Endothelial cell of umbilical vein (primary cell): ENCODE measurements at regions of chr21 and their contacts with region 1.

Region 1: DNA sequence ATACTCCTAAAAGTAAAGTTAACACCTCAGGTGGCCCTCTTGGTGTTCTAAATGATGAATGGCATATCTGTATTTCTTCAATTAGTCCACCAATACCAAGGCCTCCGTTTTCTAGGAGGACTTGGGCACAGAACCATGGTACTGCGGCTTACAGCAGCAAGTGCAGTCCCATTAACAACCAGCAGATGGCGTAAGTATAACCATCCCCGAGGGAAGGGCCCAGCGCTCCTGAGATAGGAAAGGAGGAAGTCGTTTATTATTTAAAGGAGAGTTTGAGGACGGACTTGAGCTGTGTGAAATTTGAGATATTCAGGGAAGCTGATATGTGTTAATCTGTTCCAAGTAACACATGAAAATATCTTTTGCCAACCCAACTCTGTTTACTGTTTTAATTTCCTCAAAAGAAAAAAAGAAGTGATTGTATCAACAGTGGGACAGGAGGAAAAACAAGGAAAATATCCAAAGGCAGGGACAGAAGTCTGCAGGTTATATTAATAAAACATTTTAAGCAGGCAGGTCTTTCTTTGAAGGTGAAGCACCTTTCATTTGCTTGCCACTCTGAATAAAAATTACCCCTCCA is 37.7 kb upstream of the KCNJ15 start:
- DNase-seq: peak; percentile 87
- H3K4me3 ChIP-seq: no peak overlapping the region
- H3K27ac ChIP-seq: no peak overlapping the region
- H3K4me1 ChIP-seq: peaks cover 7% of the 10 kb centered on the region
- H3K27me3 ChIP-seq: no peaks in the 10 kb centered on the region
- CTCF ChIP-seq: peak; percentile 87 to 91
- POLR2A ChIP-seq: no peak

Region 2: GRCh38 chr21:38037416-38037815 is 181.7 kb before region 1 on chr21:
- CTCF ChIA-PET with region 1: no interaction called
- POLR2A ChIA-PET with region 1: no interaction called
- dilution Hi-C with region 1: no loop called
- intact Hi-C with region 1: no loop called
- DNase-seq: peak; percentile 84
- H3K4me3 ChIP-seq: no peak overlapping the region
- H3K27ac ChIP-seq: peak overlapping the region; percentile 22
- H3K4me1 ChIP-seq: peaks cover 12% of the 10 kb centered on the region
- H3K27me3 ChIP-seq: peaks cover 0 to 2% of the 10 kb centered on the region in 2 experiments
- CTCF ChIP-seq: no peak
- POLR2A ChIP-seq: no peak

Region 3: GRCh38 chr21:38208118-38208517 is 11.0 kb before region 1 on chr21:
- CTCF ChIA-PET with region 1: interaction called, 13 read pairs
- POLR2A ChIA-PET with region 1: no interaction called
- dilution Hi-C with region 1: no loop called
- intact Hi-C with region 1: no loop called
- DNase-seq: no peak
- H3K4me3 ChIP-seq: no peak overlapping the region
- H3K27ac ChIP-seq: no peak overlapping the region
- H3K4me1 ChIP-seq: no peaks in the 10 kb centered on the region
- H3K27me3 ChIP-seq: peaks cover 29 to 41% of the 10 kb centered on the region in 2 experiments
- CTCF ChIP-seq: no peak
- POLR2A ChIP-seq: no peak

Region 4: GRCh38 chr21:38236232-38236631 is 17.1 kb after region 1 on chr21:
- CTCF ChIA-PET with region 1: interaction called, 11 read pairs
- POLR2A ChIA-PET with region 1: no interaction called
- dilution Hi-C with region 1: no loop called
- intact Hi-C with region 1: loop called (anchors 1 kb)
- DNase-seq: no peak
- H3K4me3 ChIP-seq: no peak overlapping the region
- H3K27ac ChIP-seq: no peak overlapping the region
- H3K4me1 ChIP-seq: peaks cover 16% of the 10 kb centered on the region
- H3K27me3 ChIP-seq: no peaks in the 10 kb centered on the region
- CTCF ChIP-seq: peak in 1 of 2 donors; percentile 3
- POLR2A ChIP-seq: no peak

Region 5: DNA sequence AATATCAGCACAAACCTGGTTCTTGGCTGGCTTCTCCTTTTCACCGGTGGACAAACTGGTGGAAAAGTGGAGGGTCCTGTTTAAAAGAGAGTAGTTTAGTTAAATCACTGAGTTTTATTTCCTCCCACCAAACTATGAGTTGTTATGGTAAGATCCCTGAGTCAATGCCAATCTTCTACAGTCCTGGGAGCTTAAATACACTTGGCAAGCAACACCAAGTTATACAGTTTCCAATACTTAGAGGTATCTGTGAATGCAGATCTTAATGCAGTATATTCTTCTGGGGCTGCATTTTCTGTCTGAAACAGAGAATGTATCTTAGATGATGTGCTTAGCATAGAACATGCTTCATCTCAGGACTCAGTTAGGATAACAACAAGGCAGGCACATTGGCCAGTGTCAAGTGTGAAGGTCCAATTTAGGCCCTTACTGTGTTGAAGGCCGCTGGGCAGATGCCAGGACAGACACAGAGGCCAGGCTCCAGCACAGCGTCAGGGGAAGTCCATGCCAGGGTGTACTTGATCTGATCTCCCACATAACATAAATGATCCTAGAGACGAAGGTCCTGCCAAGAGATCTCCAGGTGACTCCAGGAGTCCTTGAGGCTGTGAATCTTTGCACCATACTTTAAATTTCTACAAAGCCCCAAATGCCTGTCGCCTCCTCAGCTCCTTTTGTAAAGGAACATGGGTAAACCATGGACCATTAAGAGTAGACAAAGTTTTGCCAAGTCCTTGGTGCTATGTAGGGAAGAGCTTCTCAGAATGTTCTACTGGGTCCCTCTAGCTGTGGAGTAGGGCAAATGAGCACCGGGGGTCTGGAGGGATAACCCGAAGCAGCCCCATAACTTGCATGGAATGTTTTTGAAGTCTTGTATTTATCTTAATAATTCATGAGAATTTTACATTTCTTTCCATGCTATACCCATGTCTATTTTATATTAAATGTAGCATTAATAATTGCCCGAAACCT is 114.4 kb after region 1 on chr21:
- CTCF ChIA-PET with region 1: interaction called, 50 read pairs
- POLR2A ChIA-PET with region 1: no interaction called
- dilution Hi-C with region 1: no loop called
- intact Hi-C with region 1: loop called (anchors 1 kb)
- DNase-seq: no peak
- H3K4me3 ChIP-seq: no peak overlapping the region
- H3K27ac ChIP-seq: no peak overlapping the region
- H3K4me1 ChIP-seq: no peaks in the 10 kb centered on the region
- H3K27me3 ChIP-seq: no peaks in the 10 kb centered on the region
- CTCF ChIP-seq: peak; percentile 10 to 17
- POLR2A ChIP-seq: no peak

Region 6: DNA sequence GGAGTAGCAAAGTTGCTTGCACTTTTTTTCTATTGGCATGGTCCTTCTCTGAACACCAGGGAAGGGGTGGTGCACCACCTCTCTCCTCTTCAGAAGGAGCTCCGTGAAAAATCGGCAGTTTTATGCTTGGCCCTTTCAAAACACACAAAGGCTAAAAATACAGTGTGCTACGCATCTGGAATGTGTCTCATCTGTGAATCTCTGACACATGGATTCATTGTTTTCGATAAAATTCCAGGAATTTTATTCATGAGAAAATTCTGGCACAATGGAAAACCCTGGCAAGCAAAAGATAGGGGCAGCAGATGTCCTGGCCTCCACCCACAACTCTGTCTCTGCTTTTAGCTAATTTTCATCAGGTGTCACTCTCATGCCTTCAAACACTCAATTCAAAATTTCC is 236.3 kb after region 1 on chr21:
- CTCF ChIA-PET with region 1: no interaction called
- POLR2A ChIA-PET with region 1: no interaction called
- dilution Hi-C with region 1: no loop called
- intact Hi-C with region 1: no loop called
- DNase-seq: peak; percentile 58
- H3K4me3 ChIP-seq: no peak overlapping the region
- H3K27ac ChIP-seq: peak overlapping the region; percentile 62
- H3K4me1 ChIP-seq: peaks cover 40% of the 10 kb centered on the region
- H3K27me3 ChIP-seq: no peaks in the 10 kb centered on the region
- CTCF ChIP-seq: no peak
- POLR2A ChIP-seq: no peak

Region 7: GRCh38 chr21:38567335-38567969 is 348.3 kb after region 1 on chr21:
- CTCF ChIA-PET with region 1: no interaction called
- POLR2A ChIA-PET with region 1: no interaction called
- dilution Hi-C with region 1: no loop called
- intact Hi-C with region 1: no loop called
- DNase-seq: no peak
- H3K4me3 ChIP-seq: no peak overlapping the region
- H3K27ac ChIP-seq: no peak overlapping the region
- H3K4me1 ChIP-seq: no peaks in the 10 kb centered on the region
- H3K27me3 ChIP-seq: peaks cover 0 to 10% of the 10 kb centered on the region in 2 experiments
- CTCF ChIP-seq: no peak
- POLR2A ChIP-seq: no peak

Region 8: DNA sequence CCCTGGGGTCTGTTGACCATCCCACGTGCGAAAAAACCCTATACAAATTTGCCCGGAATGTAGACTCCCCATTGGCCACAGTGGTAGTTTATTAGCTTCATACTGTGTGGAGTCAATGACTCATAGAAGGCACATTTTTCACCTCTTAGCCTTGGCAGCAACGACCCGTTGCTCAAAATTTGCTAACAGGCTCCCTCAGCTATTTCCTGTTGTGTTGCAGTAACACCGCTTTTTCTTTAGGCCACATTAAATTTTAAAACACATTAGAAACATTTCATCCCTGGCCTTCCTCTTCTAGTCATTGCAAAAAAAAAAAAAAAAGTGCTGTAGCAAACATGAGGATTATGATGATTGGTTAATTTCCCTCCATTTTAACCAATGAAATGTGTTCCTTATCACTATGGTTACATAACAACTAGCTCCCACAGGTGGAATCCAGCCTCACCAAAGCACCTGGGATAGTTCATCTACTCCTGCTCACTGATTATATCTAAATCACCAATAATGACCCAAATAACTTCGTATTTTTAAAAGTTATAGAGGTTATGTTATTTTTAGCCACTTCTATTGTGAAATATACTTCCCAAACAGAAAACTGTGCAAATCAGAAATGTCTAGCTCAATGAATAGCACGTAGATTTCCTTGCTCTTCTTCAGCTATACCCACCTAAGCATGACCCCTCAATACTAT is 536.7 kb after region 1 on chr21:
- CTCF ChIA-PET with region 1: no interaction called
- POLR2A ChIA-PET with region 1: no interaction called
- dilution Hi-C with region 1: no loop called
- intact Hi-C with region 1: no loop called
- DNase-seq: peak; percentile 94
- H3K4me3 ChIP-seq: no peak overlapping the region
- H3K27ac ChIP-seq: no peak overlapping the region
- H3K4me1 ChIP-seq: peaks cover 9% of the 10 kb centered on the region
- H3K27me3 ChIP-seq: peaks cover 0 to 2% of the 10 kb centered on the region in 2 experiments
- CTCF ChIP-seq: no peak
- POLR2A ChIP-seq: no peak